Activated CD4-positive, alpha-beta T cell treated with anti-CD3 and anti-CD28 coated beads for 36 hours (primary cell): ENCODE measurements at regions of chr12 and their contacts with region 1.

Region 1: GRCh38 chr12:94305130-94305957 is 154.3 kb downstream of the CEP83 start:
- DNase-seq: peak; percentile 68
- ATAC-seq: peak; percentile 93
- H3K4me3 Mint-ChIP-seq: peak overlapping the region; percentile 5
- H3K27ac Mint-ChIP-seq: peak overlapping the region; percentile 70
- H3K4me1 Mint-ChIP-seq: peaks cover 30% of the 10 kb centered on the region
- H3K27me3 Mint-ChIP-seq: no peaks in the 10 kb centered on the region

Region 2: DNA sequence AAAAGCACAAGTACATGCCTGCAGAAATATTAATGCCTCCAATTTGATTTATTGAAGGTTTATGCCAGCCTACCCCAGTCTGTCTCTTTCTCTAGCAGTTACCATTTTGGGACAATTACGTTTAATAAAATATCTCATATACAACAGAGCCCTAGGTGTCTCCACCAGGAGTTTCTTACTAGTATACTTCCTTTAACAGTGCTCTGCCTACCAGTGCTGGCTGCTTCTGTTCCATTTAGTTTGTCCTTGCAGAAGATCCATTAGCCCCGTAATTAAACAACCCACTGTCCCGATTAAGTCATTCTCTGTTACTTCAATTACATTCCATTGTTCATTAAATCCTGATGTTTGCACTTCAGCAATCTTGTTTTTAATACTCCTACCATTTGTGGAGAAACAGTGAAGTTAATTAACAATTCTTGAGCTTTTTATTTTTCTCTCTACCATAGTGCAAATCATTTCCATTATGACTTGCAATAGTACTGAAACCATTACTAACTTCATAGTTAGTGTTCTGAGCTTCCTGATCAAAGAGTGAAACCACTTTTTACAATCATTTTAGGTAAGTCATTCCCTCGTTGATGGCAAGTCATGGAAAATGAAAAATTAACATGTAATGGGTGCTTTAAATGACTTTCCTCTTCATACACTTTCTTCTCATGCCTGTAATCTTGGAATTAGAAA is 35.9 kb before region 1 on chr12:
- CTCF ChIA-PET with region 1: interaction called, 7 read pairs
- POLR2A ChIA-PET with region 1: interaction called, 5 read pairs
- intact Hi-C with region 1: loop called (anchors 1 to 2 kb)
- DNase-seq: no peak
- ATAC-seq: peak; percentile 86
- H3K4me3 Mint-ChIP-seq: peak overlapping the region; percentile 24
- H3K27ac Mint-ChIP-seq: peak overlapping the region; percentile 63
- H3K4me1 Mint-ChIP-seq: peaks cover 63% of the 10 kb centered on the region
- H3K27me3 Mint-ChIP-seq: no peaks in the 10 kb centered on the region

Region 3: GRCh38 chr12:94326727-94327126 is 21.4 kb after region 1 on chr12:
- CTCF ChIA-PET with region 1: interaction called, 4 read pairs
- POLR2A ChIA-PET with region 1: no interaction called
- intact Hi-C with region 1: loop called in 1 of 2 experiments (anchors 2 kb)
- DNase-seq: no peak
- ATAC-seq: peak; percentile 86
- H3K4me3 Mint-ChIP-seq: no peak overlapping the region
- H3K27ac Mint-ChIP-seq: no peak overlapping the region
- H3K4me1 Mint-ChIP-seq: peaks cover 19% of the 10 kb centered on the region
- H3K27me3 Mint-ChIP-seq: no peaks in the 10 kb centered on the region

Region 4: DNA sequence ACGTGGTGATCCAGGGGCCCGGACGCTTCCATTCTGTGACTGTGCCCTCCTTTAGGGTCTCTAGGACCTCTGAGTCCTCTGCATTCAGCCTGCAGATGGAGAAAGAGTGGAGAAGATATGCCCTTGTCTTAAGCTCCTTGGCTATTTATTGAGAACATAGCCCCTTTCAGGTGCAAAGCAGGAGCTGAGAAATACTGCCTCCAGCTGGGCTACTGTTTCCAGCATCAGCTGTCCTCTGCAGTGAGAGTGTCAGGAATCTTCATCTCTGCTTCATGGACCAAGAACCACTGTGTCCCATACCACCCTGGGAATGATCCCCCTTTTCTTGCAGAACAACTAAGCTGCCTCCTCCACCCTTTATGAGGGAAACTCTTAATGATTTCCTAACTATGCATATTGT is 202.1 kb after region 1 on chr12:
- CTCF ChIA-PET with region 1: no interaction called
- POLR2A ChIA-PET with region 1: no interaction called
- intact Hi-C with region 1: no loop called
- DNase-seq: no peak
- ATAC-seq: no peak
- H3K4me3 Mint-ChIP-seq: no peak overlapping the region
- H3K27ac Mint-ChIP-seq: no peak overlapping the region
- H3K4me1 Mint-ChIP-seq: no peaks in the 10 kb centered on the region
- H3K27me3 Mint-ChIP-seq: no peaks in the 10 kb centered on the region